ENCODE measurements at regions of chr6 and their contacts with region 1.

Region 1: GRCh38 chr6:34196126-34196830 is 40.4 kb upstream of the HMGA1 start:
- DNase-seq: peak; percentile 89
- ATAC-seq: peak; percentile 99

Region 2: DNA sequence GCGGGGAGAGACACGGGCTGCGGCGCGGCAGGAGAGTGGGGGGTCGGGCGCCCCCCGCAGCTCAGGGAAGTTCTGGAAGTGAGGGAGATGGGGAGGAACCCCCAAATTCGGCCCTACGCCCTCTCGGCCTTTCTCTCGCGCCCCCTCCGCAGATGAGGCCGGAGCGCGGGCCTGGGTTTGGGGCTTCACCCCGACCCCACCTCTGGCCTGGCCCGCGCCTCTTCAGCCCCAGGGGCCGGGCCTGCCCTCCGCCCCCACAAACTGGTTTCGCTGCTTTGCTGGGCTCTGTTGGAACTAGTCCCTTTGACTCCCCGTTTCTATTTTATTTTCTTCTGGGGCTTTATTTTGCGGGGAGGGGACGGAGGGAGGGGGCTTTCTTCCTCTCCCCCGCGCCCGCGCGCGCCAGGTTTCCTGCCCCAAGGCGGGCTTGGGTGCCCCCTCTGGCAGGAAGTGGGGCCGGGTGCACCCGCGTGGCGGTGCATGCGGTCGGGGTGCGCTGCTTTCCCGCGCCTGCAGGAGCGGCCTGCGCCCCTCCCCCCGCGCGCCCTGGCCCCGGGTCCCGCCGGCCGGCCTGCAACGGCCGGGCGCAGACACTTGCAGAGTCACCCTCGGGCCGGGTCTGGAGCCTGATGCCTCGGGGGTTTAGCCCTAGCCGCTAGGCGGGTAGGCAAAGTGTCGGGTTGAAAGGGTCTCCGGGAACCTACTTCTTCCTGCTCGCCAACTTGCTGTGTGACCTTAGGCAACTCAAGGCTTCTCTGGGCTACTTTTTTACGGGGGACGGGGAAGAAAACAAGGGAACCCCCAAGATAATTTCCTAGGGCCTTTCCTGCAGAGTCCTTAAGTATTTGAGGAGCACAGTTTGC is 41.7 kb after region 1 on chr6:
- intact Hi-C with region 1: loop called in 1 of 2 experiments (anchors 2 kb)
- DNase-seq: no peak
- ATAC-seq: peak; percentile 7 to 14

Region 3: DNA sequence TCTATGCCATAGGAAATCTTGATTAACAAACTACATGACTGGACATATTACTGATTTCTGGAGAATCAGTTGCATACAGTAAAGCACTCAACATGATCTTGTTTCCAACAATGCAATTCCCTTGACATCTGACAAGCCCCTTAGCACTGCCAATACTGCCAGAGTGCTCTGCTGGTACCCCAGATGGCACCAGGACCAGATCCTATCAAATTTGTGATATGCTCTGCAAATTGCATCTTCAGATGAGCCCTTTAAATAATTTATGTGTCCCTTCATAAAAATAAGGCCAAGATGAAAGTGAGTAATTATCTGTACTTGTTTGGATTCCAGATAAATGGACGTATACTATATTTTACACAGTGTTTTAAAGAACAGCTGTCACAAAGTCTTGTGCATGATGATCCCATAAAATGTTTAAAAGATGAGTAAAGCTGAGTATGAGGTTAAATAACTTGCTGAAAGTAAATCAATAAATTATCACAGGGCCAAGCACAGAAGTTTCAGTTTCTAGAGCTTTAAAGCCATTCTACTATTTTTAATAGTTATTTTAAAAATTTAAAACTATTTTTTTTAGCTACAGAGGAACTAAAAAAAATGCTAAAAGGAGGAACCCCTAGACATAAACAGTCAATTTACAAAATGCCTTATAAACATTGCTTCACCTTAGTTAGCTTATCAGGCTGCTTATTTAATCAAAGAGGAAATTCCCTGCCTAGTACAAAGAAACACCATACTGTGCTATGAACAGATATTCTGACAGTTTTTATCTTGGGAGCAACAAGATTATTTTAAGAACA is 154.1 kb after region 1 on chr6:
- intact Hi-C with region 1: no loop called
- DNase-seq: no peak
- ATAC-seq: peak; percentile 23 to 53

Region 4: GRCh38 chr6:34414999-34415858 is 219.0 kb after region 1 on chr6:
- intact Hi-C with region 1: loop called (anchors 2 to 5 kb)
- DNase-seq: peak; percentile 57
- ATAC-seq: peak; percentile 88 to 95

Region 5: DNA sequence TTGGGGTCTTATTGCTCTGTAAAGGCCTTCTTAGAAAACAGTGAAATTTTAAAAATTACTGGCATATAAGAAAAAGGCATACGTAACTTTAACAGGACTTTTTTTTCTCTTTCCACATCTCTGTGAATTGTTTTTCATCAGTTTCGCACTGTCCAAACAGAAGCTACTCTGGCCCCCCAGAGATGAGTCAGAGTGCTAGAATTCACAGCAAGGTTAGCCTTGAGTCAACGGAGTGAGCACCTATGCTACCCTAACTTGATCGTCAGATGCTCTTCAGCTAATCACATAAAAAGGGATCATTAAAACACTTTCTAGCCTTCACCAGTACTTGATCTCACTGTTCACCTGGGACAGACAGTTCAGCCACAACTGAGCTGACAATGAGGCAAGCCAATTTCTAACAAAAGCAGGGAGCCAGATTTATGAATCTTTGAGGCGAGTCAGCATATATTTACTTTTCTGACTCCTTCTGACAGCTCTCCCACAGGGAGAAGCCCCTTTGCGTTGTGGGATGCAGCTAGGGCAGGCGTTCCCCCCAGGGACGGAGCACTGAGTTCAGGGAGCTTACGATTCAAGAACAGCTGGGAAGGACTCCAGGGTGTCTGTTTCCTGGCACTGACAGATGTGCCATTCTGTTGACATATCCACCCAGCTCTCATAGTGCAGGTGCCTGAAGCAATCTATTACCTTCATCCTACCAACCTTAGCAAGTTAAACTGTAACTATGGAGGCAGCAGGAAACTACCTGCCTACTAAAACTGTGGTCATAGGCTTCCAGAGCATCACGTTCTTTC is 406.2 kb after region 1 on chr6:
- intact Hi-C with region 1: loop called in 1 of 2 experiments (anchors 10 kb)
- DNase-seq: no peak
- ATAC-seq: peak in 1 of 2 donors; percentile 19

Measured in left cardiac atrium (tissue), 4 donors.